ENCODE measurements at regions of chr9 and their contacts with region 1.

Region 1: DNA sequence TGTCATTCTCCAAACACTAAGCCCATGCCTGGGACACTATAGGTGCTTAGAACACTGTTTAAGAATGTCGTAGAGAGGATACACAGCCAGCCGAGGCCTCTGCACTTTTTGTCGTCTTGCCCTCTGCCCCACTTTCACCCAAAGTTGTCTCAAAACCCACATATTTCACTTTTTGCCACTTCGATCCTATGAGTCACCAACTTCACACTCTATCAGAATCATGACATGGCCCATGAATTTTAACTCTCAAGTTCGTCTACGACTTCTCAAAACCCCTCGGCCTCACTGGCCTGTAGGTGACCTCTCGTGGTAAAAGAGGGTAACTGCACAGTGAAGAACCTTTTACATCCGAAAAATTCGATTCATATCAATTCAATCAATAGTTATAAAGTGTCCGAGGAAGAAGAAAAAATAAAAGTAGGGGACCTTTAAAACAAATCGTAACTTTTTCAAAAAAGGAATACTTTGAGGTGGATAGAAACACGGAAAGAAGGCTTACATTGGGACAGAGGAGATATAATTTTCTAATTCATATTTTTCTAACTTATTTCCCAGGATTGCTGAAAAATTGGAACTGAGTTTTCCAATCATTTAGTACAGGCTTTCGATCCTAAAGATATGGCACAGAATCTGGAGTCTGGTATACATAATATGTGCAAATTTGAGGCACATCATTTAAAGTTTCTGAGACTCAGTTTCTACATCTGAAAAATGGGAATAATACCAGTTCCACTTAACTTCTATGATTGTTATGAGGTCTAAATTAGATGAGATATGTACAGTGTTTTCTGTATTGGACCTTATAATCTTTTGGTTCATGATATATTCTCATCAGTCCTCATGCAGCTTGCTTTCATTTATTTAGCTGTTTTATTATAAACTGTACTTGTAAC is 122.6 kb downstream of the APBA1 start:
- DNase-seq: no peak
- H3K4me3 ChIP-seq: no peak overlapping the region
- H3K27ac ChIP-seq: no peak overlapping the region
- H3K4me1 ChIP-seq: no peaks in the 10 kb centered on the region
- H3K27me3 ChIP-seq: no peaks in the 10 kb centered on the region
- CTCF ChIP-seq: peak; percentile 53 to 82 (median 57)

Region 2: GRCh38 chr9:69466151-69466550 is 83.4 kb before region 1 on chr9:
- intact Hi-C with region 1: loop called (anchors 10 kb)
- DNase-seq: no peak
- H3K4me3 ChIP-seq: no peak overlapping the region
- H3K27ac ChIP-seq: no peak overlapping the region
- H3K4me1 ChIP-seq: no peaks in the 10 kb centered on the region
- H3K27me3 ChIP-seq: no peaks in the 10 kb centered on the region
- CTCF ChIP-seq: no peak

Measured in ascending aorta (tissue), 2 donors.